Right lobe of liver (tissue), 6 donors: ENCODE measurements at regions of chr2 and their contacts with region 1.

Region 1: GRCh38 chr2:128321784-128322714 is 3.4 kb upstream of the HS6ST1 start:
- DNase-seq: peak; percentile 85 to 87 (median 86)
- ATAC-seq: peak; percentile 73 to 81 (median 76)
- H3K4me3 ChIP-seq: peak overlapping the region; percentile 41 to 76 (median 55)
- H3K27ac ChIP-seq: peak overlapping the region; percentile 82 to 86 (median 86)
- H3K4me1 ChIP-seq: peaks cover 0 to 16% (median 3%) of the 10 kb centered on the region in 4 donors
- H3K27me3 ChIP-seq: no peaks in the 10 kb centered on the region
- CTCF ChIP-seq: peak; percentile 96 to 100 (median 98)
- POLR2A ChIP-seq: peak; percentile 37

Region 2: DNA sequence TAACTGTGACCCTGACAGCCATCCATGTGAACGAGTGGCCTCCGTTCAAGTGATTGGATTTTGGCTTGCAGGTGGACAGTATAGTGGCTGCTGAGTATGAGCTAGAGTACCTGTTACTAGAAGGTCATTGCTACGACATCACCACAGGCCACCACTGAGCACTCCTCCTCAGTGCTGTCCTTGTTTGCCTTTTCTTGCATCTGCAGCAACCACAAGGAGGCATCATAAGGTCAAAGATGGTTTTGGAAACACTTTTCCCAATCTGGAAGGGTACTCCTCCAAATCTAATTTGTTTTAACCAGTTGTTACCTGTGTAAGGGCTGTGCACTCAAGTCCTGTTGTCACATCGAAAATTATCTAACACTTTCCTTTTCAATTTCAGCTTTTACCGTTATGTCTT is 149.9 kb before region 1 on chr2:
- intact Hi-C with region 1: no loop called
- DNase-seq: no peak
- ATAC-seq: peak; percentile 28 to 47 (median 35)
- H3K4me3 ChIP-seq: no peak overlapping the region
- H3K27ac ChIP-seq: no peak overlapping the region
- H3K4me1 ChIP-seq: no peaks in the 10 kb centered on the region
- H3K27me3 ChIP-seq: no peaks in the 10 kb centered on the region
- CTCF ChIP-seq: peak; percentile 17 to 36 (median 26)
- POLR2A ChIP-seq: no peak

Region 3: DNA sequence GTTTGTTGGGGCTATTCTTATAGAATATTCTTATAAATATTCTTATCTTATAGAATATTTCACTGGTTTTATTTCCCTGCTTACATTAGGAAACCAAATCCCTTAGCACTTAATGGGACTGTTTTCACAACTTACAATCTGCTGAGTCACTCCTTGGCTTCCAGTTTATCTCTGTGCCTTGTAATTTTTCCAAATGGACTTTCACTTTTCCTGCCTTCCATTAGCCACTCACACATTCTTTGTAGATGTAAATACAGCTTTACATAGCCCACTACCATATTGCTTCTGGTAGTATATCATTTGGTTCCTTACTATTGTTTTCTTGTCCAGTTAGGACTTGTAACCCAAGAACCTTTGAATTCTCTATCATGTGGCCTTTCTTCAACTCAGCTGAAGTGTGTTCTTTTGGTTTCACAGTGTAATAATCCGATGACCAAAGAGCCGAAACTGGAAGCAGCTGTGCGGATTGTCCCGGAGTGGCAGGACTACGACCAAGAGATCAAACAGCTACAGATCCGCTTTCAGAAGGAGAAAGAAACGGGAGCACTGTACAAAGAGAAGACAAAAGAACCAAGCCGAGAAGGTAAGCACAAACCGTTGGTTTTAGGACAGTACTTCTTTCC is 134.9 kb before region 1 on chr2:
- intact Hi-C with region 1: loop called in 1 of 2 experiments (anchors 10 kb)
- DNase-seq: no peak
- ATAC-seq: peak; percentile 81 to 87 (median 84)
- H3K4me3 ChIP-seq: peak overlapping the region in 2 of 3 donors; percentile 8 to 25
- H3K27ac ChIP-seq: peak overlapping the region in 2 of 3 donors; percentile 8 to 57
- H3K4me1 ChIP-seq: peaks cover 0 to 12% (median 0%) of the 10 kb centered on the region in 4 donors
- H3K27me3 ChIP-seq: no peaks in the 10 kb centered on the region
- CTCF ChIP-seq: no peak
- POLR2A ChIP-seq: no peak

Region 4: GRCh38 chr2:128520791-128521190 is 198.7 kb after region 1 on chr2:
- intact Hi-C with region 1: loop called in 1 of 2 experiments (anchors 10 kb)
- DNase-seq: no peak
- ATAC-seq: no peak
- H3K4me3 ChIP-seq: no peak overlapping the region
- H3K27ac ChIP-seq: no peak overlapping the region
- H3K4me1 ChIP-seq: no peaks in the 10 kb centered on the region
- H3K27me3 ChIP-seq: no peaks in the 10 kb centered on the region
- CTCF ChIP-seq: no peak
- POLR2A ChIP-seq: no peak

Region 5: GRCh38 chr2:128593879-128594650 is 272.0 kb after region 1 on chr2:
- intact Hi-C with region 1: loop called (anchors 10 kb)
- DNase-seq: peak in 2 of 3 donors; percentile 52 to 56
- ATAC-seq: peak; percentile 59 to 65 (median 62)
- H3K4me3 ChIP-seq: peak overlapping the region; percentile 47 to 55 (median 53)
- H3K27ac ChIP-seq: peak overlapping the region; percentile 64 to 93 (median 74)
- H3K4me1 ChIP-seq: peaks cover 0 to 44% (median 5%) of the 10 kb centered on the region in 4 donors
- H3K27me3 ChIP-seq: no peaks in the 10 kb centered on the region
- CTCF ChIP-seq: no peak
- POLR2A ChIP-seq: peak; percentile 67